ENCODE measurements at regions of chr3 and their contacts with region 1.

Region 1: GRCh38 chr3:69084326-69085167 is at the start of gene ARL6IP5:
- DNase-seq: peak; percentile 74 to 81
- H3K4me3 ChIP-seq: peak within 1 kb of the TSS; percentile 74
- H3K27ac ChIP-seq: peak within 1 kb of the TSS; percentile 94
- H3K4me1 ChIP-seq: peaks cover 74% of the 10 kb centered on the region
- H3K27me3 ChIP-seq: no peaks in the 10 kb centered on the region
- CTCF ChIP-seq: no peak
- total RNA-seq, gene ARL6IP5: 35.6 and 45.7 TPM in 2 replicates

Region 2: GRCh38 chr3:69051756-69052471 is 32.6 kb before region 1 on chr3 and contains the start of gene TMF1:
- CTCF ChIA-PET with region 1: no interaction called
- POLR2A ChIA-PET with region 1: interaction called, 4 read pairs
- intact Hi-C with region 1: loop called (anchors 5 kb)
- DNase-seq: peak; percentile 93 to 95
- H3K4me3 ChIP-seq: peak within 1 kb of the TSS; percentile 77
- H3K27ac ChIP-seq: peak within 1 kb of the TSS; percentile 70
- H3K4me1 ChIP-seq: no peaks in the 10 kb centered on the region
- H3K27me3 ChIP-seq: no peaks in the 10 kb centered on the region
- CTCF ChIP-seq: no peak
- total RNA-seq, gene TMF1: 34.5 and 35.5 TPM in 2 replicates

Region 3: GRCh38 chr3:69094467-69095205 is 10.1 kb after region 1 on chr3:
- CTCF ChIA-PET with region 1: no interaction called
- POLR2A ChIA-PET with region 1: no interaction called
- intact Hi-C with region 1: no loop called
- DNase-seq: no peak
- H3K4me3 ChIP-seq: no peak overlapping the region
- H3K27ac ChIP-seq: no peak overlapping the region
- H3K4me1 ChIP-seq: peaks cover 33% of the 10 kb centered on the region
- H3K27me3 ChIP-seq: no peaks in the 10 kb centered on the region
- CTCF ChIP-seq: no peak

Region 4: DNA sequence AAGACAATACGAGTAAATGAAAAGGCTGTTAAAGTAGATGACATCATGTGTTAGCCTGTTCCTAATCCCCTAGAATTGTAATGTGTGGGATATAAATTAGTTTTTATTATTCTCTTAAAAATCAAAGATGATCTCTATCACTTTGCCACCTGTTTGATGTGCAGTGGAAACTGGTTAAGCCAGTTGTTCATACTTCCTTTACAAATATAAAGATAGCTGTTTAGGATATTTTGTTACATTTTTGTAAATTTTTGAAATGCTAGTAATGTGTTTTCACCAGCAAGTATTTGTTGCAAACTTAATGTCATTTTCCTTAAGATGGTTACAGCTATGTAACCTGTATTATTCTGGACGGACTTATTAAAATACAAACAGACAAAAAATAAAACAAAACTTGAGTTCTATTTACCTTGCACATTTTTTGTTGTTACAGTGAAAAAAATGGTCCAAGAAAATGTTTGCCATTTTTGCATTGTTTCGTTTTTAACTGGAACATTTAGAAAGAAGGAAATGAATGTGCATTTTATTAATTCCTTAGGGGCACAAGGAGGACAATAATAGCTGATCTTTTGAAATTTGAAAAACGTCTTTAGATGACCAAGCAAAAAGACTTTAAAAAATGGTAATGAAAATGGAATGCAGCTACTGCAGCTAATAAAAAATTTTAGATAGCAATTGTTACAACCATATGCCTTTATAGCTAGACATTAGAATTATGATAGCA is 20.6 kb after region 1 on chr3:
- CTCF ChIA-PET with region 1: interaction called, 11 read pairs
- POLR2A ChIA-PET with region 1: interaction called, 22 read pairs
- intact Hi-C with region 1: loop called (anchors 2 kb)
- DNase-seq: no peak
- H3K4me3 ChIP-seq: no peak overlapping the region
- H3K27ac ChIP-seq: no peak overlapping the region
- H3K4me1 ChIP-seq: peaks cover 9% of the 10 kb centered on the region; the same call in 1 of the 2 replicates
- H3K27me3 ChIP-seq: no peaks in the 10 kb centered on the region
- CTCF ChIP-seq: no peak

Region 5: DNA sequence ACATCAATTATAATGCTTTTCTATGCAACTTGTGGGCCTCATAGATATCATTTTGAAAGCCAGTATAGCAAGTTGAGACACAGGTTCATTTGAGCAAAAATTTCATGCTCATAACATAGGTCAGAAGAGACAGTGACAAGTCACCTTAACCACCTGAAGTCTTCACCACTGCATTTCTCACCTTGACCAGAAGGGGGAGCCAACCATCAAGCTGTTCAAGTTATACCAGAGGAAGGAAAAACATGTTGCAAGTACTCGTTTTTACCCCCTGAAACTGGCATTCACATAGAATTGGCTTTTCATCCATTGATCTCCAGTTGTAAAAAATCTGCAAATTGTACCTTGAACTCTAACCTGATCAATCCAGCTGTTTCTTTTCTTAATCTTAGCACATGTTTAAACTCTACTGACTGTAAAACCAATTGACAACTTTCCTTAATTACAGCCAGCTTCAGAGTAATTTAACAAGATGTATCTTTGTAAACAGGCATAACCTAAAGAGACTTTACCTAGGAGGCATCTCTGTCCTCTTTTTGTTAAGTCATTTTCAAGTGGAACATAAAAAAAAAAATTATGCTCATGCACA is 36.4 kb after region 1 on chr3:
- CTCF ChIA-PET with region 1: interaction called, 7 read pairs
- POLR2A ChIA-PET with region 1: no interaction called
- intact Hi-C with region 1: loop called (anchors 1 kb)
- DNase-seq: peak; percentile 64 to 77
- H3K4me3 ChIP-seq: no peak overlapping the region
- H3K27ac ChIP-seq: no peak overlapping the region
- H3K4me1 ChIP-seq: peaks cover 18% of the 10 kb centered on the region
- H3K27me3 ChIP-seq: no peaks in the 10 kb centered on the region
- CTCF ChIP-seq: peak; percentile 83

Region 6: DNA sequence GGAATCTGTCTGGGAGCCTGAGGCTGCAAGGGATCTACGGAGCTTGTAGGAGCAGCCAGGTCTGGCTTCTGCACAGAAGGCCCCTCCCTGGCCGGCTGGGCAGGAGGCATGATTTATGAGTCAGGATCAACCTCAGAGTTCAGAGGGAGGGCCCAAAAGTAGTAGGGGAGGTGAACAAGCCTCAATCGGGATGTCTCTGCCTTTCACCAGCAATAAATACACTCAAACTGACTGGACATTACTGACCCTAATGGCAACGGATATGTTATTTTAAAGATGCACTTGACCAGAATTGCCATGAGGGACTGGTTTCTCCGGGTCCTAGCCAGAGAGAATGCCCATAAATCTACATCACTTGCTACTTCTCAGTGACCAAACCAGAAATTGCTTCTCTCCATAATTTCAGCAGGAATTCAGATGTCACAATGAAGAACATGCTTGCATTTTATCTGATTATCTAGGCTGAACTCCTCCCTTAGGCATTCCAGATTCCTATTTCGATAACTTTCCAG is 147.4 kb after region 1 on chr3:
- CTCF ChIA-PET with region 1: no interaction called
- POLR2A ChIA-PET with region 1: no interaction called
- intact Hi-C with region 1: loop called (anchors 10 kb)
- DNase-seq: peak; percentile 80 to 92
- H3K4me3 ChIP-seq: peak overlapping the region; percentile 35; the same call in 1 of the 2 replicates
- H3K27ac ChIP-seq: peak overlapping the region; percentile 92
- H3K4me1 ChIP-seq: peaks cover 83% of the 10 kb centered on the region
- H3K27me3 ChIP-seq: no peaks in the 10 kb centered on the region
- CTCF ChIP-seq: no peak